CD8-positive, alpha-beta T cell (primary cell): ENCODE measurements at regions of chr10 and their contacts with region 1.

Region 1: DNA sequence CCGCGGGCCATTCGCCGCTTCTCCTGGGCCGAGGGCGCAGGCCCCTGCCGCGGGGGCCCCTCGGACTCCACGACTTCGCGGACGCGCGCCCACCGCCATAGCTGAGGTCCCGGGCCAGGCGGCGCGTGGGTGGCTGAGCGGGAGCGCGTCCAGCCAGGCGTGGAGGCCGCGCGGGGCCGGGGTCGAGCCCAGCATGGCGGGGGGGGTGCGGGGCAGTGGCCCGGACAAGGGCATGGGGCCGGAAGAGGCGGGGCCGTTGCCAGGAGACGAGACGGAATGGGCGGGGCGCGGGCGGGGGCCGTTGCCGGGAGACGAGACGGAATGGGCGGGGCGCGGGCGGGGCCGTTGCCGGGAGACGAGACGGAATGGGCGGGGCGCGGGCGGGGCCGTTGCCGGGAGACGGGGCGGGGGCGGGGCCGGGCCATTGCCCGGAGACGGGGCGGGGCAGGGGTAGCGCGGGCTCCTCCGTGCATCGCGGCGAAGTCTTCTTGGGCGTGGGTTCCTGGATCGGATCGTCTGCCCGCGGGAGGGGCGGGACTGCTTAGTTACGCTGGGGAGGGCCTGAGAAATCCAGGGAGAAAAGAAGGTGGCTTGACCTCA is 14.8 kb downstream of the ADAM8 start:
- DNase-seq: peak; percentile 73 to 89 (median 82)
- ATAC-seq: peak; percentile 29
- H3K4me3 ChIP-seq: peak overlapping the region; percentile 61 to 68
- H3K4me3 Mint-ChIP-seq: peak overlapping the region; percentile 82
- H3K27ac ChIP-seq: peak overlapping the region; percentile 63 to 74
- H3K27ac Mint-ChIP-seq: peak overlapping the region; percentile 77
- H3K4me1 ChIP-seq: peaks cover 71% of the 10 kb centered on the region
- H3K4me1 Mint-ChIP-seq: peaks cover 66% of the 10 kb centered on the region
- H3K27me3 ChIP-seq: no peaks in the 10 kb centered on the region
- H3K27me3 Mint-ChIP-seq: no peaks in the 10 kb centered on the region
- CTCF ChIP-seq: no peak

Region 2: GRCh38 chr10:132158122-132158741 is 1103.6 kb before region 1 on chr10:
- CTCF ChIA-PET with region 1: no interaction called
- POLR2A ChIA-PET with region 1: no interaction called
- intact Hi-C with region 1: loop called in 1 of 2 experiments (anchors 5 kb)
- DNase-seq: peak in 5 of 9 experiments; percentile 21 to 74 (median 46)
- ATAC-seq: peak; percentile 20
- H3K4me3 ChIP-seq: no peak overlapping the region
- H3K4me3 Mint-ChIP-seq: no peak overlapping the region
- H3K27ac ChIP-seq: peak overlapping the region; percentile 98 to 99
- H3K27ac Mint-ChIP-seq: peak overlapping the region; percentile 87
- H3K4me1 ChIP-seq: peaks cover 30% of the 10 kb centered on the region
- H3K4me1 Mint-ChIP-seq: peaks cover 19% of the 10 kb centered on the region
- H3K27me3 ChIP-seq: no peaks in the 10 kb centered on the region
- H3K27me3 Mint-ChIP-seq: no peaks in the 10 kb centered on the region
- CTCF ChIP-seq: no peak

Region 3: DNA sequence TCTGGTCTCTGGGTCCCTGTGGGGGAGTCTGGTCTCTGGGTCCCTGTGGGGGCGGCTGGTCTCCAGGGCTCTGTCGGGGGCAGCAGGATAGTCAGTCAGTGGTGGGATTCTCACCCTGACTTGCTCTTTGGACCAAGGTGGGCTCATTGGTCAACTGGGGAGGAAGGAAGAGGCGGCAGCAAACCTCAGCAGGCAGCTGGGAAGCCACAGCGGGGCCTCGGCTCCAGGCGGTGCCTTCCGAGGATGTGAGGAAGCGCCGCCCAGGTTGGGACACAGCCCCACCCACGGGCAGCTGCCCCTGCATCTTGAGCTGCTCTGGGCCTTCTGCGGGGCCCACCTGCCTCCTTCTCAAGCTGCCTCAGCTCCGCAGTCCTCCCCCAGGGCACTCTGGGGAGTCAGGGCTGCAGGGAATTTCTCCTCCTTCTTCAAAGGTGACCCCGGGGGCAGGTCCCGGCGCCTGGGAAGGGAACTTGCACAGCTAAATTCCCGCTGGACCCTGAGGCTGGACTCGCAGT is 122.2 kb before region 1 on chr10:
- CTCF ChIA-PET with region 1: interaction called, 4 read pairs
- POLR2A ChIA-PET with region 1: no interaction called
- intact Hi-C with region 1: loop called in 1 of 2 experiments (anchors 10 kb)
- DNase-seq: peak in 2 of 9 experiments; percentile 2 to 37
- ATAC-seq: no peak
- H3K4me3 ChIP-seq: no peak overlapping the region
- H3K4me3 Mint-ChIP-seq: no peak overlapping the region
- H3K27ac ChIP-seq: no peak overlapping the region
- H3K27ac Mint-ChIP-seq: no peak overlapping the region
- H3K4me1 ChIP-seq: no peaks in the 10 kb centered on the region
- H3K4me1 Mint-ChIP-seq: peaks cover 2% of the 10 kb centered on the region
- H3K27me3 ChIP-seq: peaks cover 0 to 2% of the 10 kb centered on the region in 2 experiments
- H3K27me3 Mint-ChIP-seq: peaks cover 16% of the 10 kb centered on the region
- CTCF ChIP-seq: no peak

Region 4: DNA sequence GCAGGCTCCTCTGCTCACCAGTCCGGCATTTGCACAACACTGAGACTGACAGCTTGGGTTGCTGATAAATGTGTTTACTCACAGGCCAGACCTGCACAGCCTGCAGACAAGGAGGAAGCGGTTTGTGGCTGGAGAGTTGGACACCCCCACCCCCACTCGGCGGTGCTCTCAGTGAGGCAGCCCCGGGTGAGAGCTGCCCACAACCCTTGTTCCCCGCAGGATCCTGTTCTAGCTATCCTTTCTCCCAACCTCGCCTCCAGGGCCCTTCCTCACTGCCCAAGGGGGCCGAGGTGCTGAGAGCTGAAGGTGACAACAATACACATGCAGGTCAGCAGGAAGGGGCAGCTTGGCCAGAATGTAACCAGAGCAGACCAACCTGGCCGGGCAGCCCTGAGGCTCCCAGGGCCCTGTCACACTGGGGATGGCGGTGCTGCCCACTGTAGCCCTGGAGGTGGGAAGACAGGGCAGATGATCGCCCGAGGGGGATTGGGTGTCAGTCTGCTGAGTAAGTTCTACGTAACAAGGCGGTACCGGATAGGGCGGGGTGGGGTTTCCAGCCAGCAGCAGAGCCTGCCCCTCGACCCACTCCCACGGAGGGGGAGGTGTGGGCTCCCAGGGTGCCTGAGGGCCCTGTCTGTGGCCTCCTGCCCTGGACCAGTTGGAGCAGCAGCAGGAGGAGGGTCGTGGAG is 16.9 kb after region 1 on chr10:
- CTCF ChIA-PET with region 1: interaction called, 18 read pairs
- POLR2A ChIA-PET with region 1: interaction called, 14 read pairs
- intact Hi-C with region 1: loop called (anchors 1 kb)
- DNase-seq: peak; percentile 46 to 92 (median 75)
- ATAC-seq: peak; percentile 37
- H3K4me3 ChIP-seq: peak overlapping the region in 1 of 2 experiments; percentile 30
- H3K4me3 Mint-ChIP-seq: peak overlapping the region; percentile 79
- H3K27ac ChIP-seq: peak overlapping the region; percentile 58 to 94
- H3K27ac Mint-ChIP-seq: peak overlapping the region; percentile 95
- H3K4me1 ChIP-seq: peaks cover 50% of the 10 kb centered on the region
- H3K4me1 Mint-ChIP-seq: peaks cover 40% of the 10 kb centered on the region
- H3K27me3 ChIP-seq: no peaks in the 10 kb centered on the region
- H3K27me3 Mint-ChIP-seq: no peaks in the 10 kb centered on the region
- CTCF ChIP-seq: no peak

Region 5: GRCh38 chr10:133318494-133319127 is 56.8 kb after region 1 on chr10:
- CTCF ChIA-PET with region 1: interaction called, 14 read pairs
- POLR2A ChIA-PET with region 1: no interaction called
- intact Hi-C with region 1: no loop called
- DNase-seq: peak; percentile 49 to 80 (median 70)
- ATAC-seq: peak; percentile 89
- H3K4me3 ChIP-seq: peak overlapping the region; percentile 50 to 60
- H3K4me3 Mint-ChIP-seq: peak overlapping the region; percentile 63
- H3K27ac ChIP-seq: no peak overlapping the region
- H3K27ac Mint-ChIP-seq: no peak overlapping the region
- H3K4me1 ChIP-seq: peaks cover 7% of the 10 kb centered on the region
- H3K4me1 Mint-ChIP-seq: peaks cover 11% of the 10 kb centered on the region
- H3K27me3 ChIP-seq: peaks cover 0 to 10% of the 10 kb centered on the region in 2 experiments
- H3K27me3 Mint-ChIP-seq: peaks cover 9% of the 10 kb centered on the region
- CTCF ChIP-seq: peak; percentile 80